OCI-LY7 (cell line): ENCODE measurements at regions of chr11 and their contacts with region 1.

Region 1: GRCh38 chr11:87290304-87290922 is 252.7 kb downstream of the TMEM135 start:
- DNase-seq: peak; percentile 74
- H3K4me3 ChIP-seq: no peak overlapping the region
- H3K27ac ChIP-seq: no peak overlapping the region
- H3K4me1 ChIP-seq: peaks cover 26% of the 10 kb centered on the region
- CTCF ChIP-seq: peak; percentile 96

Region 2: GRCh38 chr11:86671682-86672621 is 618.5 kb before region 1 on chr11 and contains the start of gene ME3:
- CTCF ChIA-PET with region 1: no interaction called
- POLR2A ChIA-PET with region 1: no interaction called
- intact Hi-C with region 1: no loop called
- DNase-seq: no peak
- H3K4me3 ChIP-seq: no peak within 1 kb of the TSS
- H3K27ac ChIP-seq: no peak within 1 kb of the TSS
- H3K4me1 ChIP-seq: no peaks in the 10 kb centered on the region
- CTCF ChIP-seq: no peak
- total RNA-seq, gene ME3: not detected in 2 replicates

Region 3: GRCh38 chr11:86938900-86939880 is 351.2 kb before region 1 on chr11:
- CTCF ChIA-PET with region 1: interaction called, 3 read pairs
- POLR2A ChIA-PET with region 1: no interaction called
- intact Hi-C with region 1: loop called (anchors 1 kb)
- DNase-seq: peak; percentile 62
- H3K4me3 ChIP-seq: no peak overlapping the region
- H3K27ac ChIP-seq: no peak overlapping the region
- H3K4me1 ChIP-seq: no peaks in the 10 kb centered on the region
- CTCF ChIP-seq: peak; percentile 80

Region 4: GRCh38 chr11:86990515-86990914 is 299.9 kb before region 1 on chr11:
- CTCF ChIA-PET with region 1: no interaction called
- POLR2A ChIA-PET with region 1: no interaction called
- intact Hi-C with region 1: loop called (anchors 5 kb)
- DNase-seq: no peak
- H3K4me3 ChIP-seq: no peak overlapping the region
- H3K27ac ChIP-seq: no peak overlapping the region
- H3K4me1 ChIP-seq: no peaks in the 10 kb centered on the region
- CTCF ChIP-seq: no peak

Region 5: DNA sequence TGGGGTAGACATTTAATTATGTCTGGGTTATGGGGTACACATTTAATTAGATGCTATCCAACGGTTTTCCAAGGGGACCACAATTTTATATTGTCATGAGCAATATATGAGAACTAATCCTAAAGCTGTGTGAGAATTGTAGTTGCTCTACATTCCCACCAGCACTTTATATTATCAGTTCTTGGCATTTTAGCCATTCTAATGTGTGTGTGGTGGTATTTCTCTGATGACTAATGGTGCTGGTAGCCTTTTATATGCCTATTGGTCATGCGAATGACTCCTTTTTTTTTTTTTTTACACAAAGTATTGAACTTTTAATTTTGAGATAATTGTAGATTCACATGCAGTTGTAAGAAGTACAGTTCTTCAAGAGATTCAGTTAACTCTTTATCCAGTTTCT is 226.4 kb before region 1 on chr11:
- CTCF ChIA-PET with region 1: no interaction called
- POLR2A ChIA-PET with region 1: no interaction called
- intact Hi-C with region 1: no loop called
- DNase-seq: no peak
- H3K4me3 ChIP-seq: no peak overlapping the region
- H3K27ac ChIP-seq: no peak overlapping the region
- H3K4me1 ChIP-seq: no peaks in the 10 kb centered on the region
- CTCF ChIP-seq: no peak

Region 6: GRCh38 chr11:87352759-87353707 is 62.6 kb after region 1 on chr11:
- CTCF ChIA-PET with region 1: no interaction called
- POLR2A ChIA-PET with region 1: interaction called, 3 read pairs
- intact Hi-C with region 1: loop called (anchors 1 kb)
- DNase-seq: peak; percentile 91
- H3K4me3 ChIP-seq: no peak overlapping the region
- H3K27ac ChIP-seq: peak overlapping the region; percentile 92
- H3K4me1 ChIP-seq: peaks cover 79% of the 10 kb centered on the region
- CTCF ChIP-seq: peak; percentile 96